ENCODE measurements at regions of chr21 and their contacts with region 1.

Region 1: GRCh38 chr21:46323227-46324128 is at the start of gene C21orf58:
- DNase-seq: peak; percentile 97 to 98
- ATAC-seq: peak; percentile 84 to 87
- H3K4me3 ChIP-seq: peak within 1 kb of the TSS; percentile 87 to 93 (median 88)
- H3K27ac ChIP-seq: peak within 1 kb of the TSS; percentile 96 to 100 (median 98)
- H3K4me1 ChIP-seq: peaks cover 18 to 26% of the 10 kb centered on the region in 2 donors
- H3K27me3 ChIP-seq: no peaks in the 10 kb centered on the region
- CTCF ChIP-seq: no peak
- POLR2A ChIP-seq: no peak
- total RNA-seq, gene C21orf58: 0.44 to 1.6 (median 0.74) TPM

Region 2: GRCh38 chr21:46144464-46145070 is 178.9 kb before region 1 on chr21:
- in situ Hi-C with region 1: no loop called
- intact Hi-C with region 1: loop called (anchors 5 kb)
- DNase-seq: no peak
- ATAC-seq: no peak
- H3K4me3 ChIP-seq: no peak overlapping the region
- H3K27ac ChIP-seq: no peak overlapping the region
- H3K4me1 ChIP-seq: no peaks in the 10 kb centered on the region
- H3K27me3 ChIP-seq: no peaks in the 10 kb centered on the region
- CTCF ChIP-seq: no peak
- POLR2A ChIP-seq: no peak

Region 3: GRCh38 chr21:46184625-46185555 is 138.6 kb before region 1 on chr21:
- in situ Hi-C with region 1: no loop called
- intact Hi-C with region 1: loop called (anchors 5 kb)
- DNase-seq: peak; percentile 48 to 87
- ATAC-seq: peak; percentile 27 to 76
- H3K4me3 ChIP-seq: peak overlapping the region; percentile 49 to 66 (median 56)
- H3K27ac ChIP-seq: peak overlapping the region; percentile 73 to 94 (median 86)
- H3K4me1 ChIP-seq: peaks cover 23 to 33% of the 10 kb centered on the region in 2 donors
- H3K27me3 ChIP-seq: no peaks in the 10 kb centered on the region
- CTCF ChIP-seq: no peak
- POLR2A ChIP-seq: peak; percentile 10 to 62

Region 4: GRCh38 chr21:46285761-46286496 is 37.5 kb before region 1 on chr21 and contains the start of gene YBEY:
- in situ Hi-C with region 1: no loop called
- intact Hi-C with region 1: loop called (anchors 1 kb)
- DNase-seq: peak; percentile 81 to 85
- ATAC-seq: peak; percentile 97
- H3K4me3 ChIP-seq: peak within 1 kb of the TSS; percentile 75 to 93 (median 88)
- H3K27ac ChIP-seq: peak within 1 kb of the TSS; percentile 85 to 98 (median 92)
- H3K4me1 ChIP-seq: peaks cover 42 to 45% of the 10 kb centered on the region in 2 donors
- H3K27me3 ChIP-seq: no peaks in the 10 kb centered on the region
- CTCF ChIP-seq: peak; percentile 17 to 55 (median 49)
- POLR2A ChIP-seq: peak; percentile 67 to 83
- total RNA-seq, gene YBEY: 11.3 to 27.9 (median 18.7) TPM

Region 5: DNA sequence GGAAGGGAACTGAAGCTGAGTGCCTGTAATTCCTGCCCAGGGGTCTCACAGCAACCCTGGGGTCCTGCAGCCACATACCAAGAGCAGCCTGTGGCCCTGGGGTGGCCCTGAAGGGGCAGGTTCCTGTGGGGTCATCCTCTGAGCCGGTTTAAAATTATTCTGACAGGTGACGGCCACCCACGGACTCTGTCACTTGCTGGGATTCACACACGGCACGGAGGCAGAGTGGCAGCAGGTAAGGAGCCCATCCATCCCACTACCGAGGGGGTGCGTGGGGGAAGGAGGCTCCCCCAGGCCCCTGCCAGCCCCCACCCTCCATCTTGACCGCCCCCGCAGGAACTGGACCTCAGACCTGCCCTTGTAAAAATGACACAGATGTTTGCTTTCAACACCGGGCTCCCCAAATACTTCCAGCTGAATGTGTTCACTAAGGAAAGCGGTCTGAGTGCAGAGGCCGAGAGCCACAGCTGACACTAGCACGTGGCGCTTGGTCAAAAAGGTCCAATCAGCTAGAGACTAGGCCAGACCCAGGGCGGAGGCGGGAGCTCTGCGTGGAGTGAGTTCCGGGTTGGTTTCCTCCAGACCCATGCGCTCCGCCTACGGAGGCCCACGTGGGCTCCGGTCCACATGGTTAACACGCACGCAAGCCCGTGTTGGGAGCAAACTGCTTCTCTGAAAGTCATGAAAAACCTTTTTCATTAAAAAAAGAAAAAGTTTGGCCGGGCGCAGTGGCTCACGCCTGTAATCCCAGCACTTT is 27.3 kb before region 1 on chr21:
- in situ Hi-C with region 1: no loop called
- intact Hi-C with region 1: no loop called
- DNase-seq: peak; percentile 76 to 80
- ATAC-seq: peak; percentile 77 to 92
- H3K4me3 ChIP-seq: peak overlapping the region in 3 of 4 donors; percentile 9 to 52 (median 13)
- H3K27ac ChIP-seq: peak overlapping the region; percentile 53 to 69 (median 58)
- H3K4me1 ChIP-seq: peaks cover 9 to 11% of the 10 kb centered on the region in 2 donors
- H3K27me3 ChIP-seq: peaks cover 7 to 27% (median 14%) of the 10 kb centered on the region in 3 donors
- CTCF ChIP-seq: no peak
- POLR2A ChIP-seq: no peak

Region 6: GRCh38 chr21:46458315-46459023 is 135.0 kb after region 1 on chr21 and contains the start of gene DIP2A:
- in situ Hi-C with region 1: no loop called
- intact Hi-C with region 1: loop called (anchors 1 kb)
- DNase-seq: peak; percentile 94 to 96
- ATAC-seq: peak; percentile 78 to 85
- H3K4me3 ChIP-seq: peak within 1 kb of the TSS; percentile 70 to 96 (median 92)
- H3K27ac ChIP-seq: peak within 1 kb of the TSS; percentile 87 to 97 (median 96)
- H3K4me1 ChIP-seq: peaks cover 49 to 63% of the 10 kb centered on the region in 2 donors
- H3K27me3 ChIP-seq: no peaks in the 10 kb centered on the region
- CTCF ChIP-seq: peak in 1 of 5 experiments; percentile 20
- POLR2A ChIP-seq: peak; percentile 94 to 98
- total RNA-seq, gene DIP2A: 6.3 to 15.5 (median 11.8) TPM

Measured in gastrocnemius medialis (tissue), 4 donors.